B cell (primary cell): ENCODE measurements at regions of chr1 and their contacts with region 1.

Region 1: DNA sequence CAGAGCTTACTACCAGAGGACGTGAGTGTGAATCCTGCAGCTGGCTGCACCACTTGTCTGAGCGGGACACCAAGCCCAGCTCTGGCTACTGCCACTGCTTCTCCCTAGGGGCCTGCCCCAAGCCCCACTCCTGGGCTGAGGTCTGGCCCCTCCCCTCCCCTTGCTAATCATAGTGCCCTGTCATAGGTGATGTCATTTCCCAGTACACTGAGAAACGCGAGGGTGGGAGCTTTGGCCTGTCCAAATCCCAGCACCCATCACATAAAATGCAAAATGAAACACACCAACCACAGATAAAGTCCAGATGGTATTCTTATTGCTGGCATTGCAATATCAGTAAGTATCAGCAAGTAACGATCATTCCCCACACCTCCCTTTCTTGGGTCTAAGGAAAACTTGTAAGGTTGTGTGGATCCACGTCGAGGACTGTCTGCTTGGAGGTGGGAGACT is 77.7 kb downstream of the TOMM20 start:
- DNase-seq: no peak
- ATAC-seq: peak; percentile 55
- H3K4me3 ChIP-seq: no peak overlapping the region
- H3K4me3 Mint-ChIP-seq: peak overlapping the region; percentile 32
- H3K27ac ChIP-seq: no peak overlapping the region
- H3K27ac Mint-ChIP-seq: peak overlapping the region; percentile 74
- H3K4me1 ChIP-seq: peaks cover 13 to 22% of the 10 kb centered on the region in 2 donors
- H3K4me1 Mint-ChIP-seq: peaks cover 41% of the 10 kb centered on the region
- H3K27me3 ChIP-seq: no peaks in the 10 kb centered on the region
- H3K27me3 Mint-ChIP-seq: no peaks in the 10 kb centered on the region
- CTCF ChIP-seq: no peak

Region 2: DNA sequence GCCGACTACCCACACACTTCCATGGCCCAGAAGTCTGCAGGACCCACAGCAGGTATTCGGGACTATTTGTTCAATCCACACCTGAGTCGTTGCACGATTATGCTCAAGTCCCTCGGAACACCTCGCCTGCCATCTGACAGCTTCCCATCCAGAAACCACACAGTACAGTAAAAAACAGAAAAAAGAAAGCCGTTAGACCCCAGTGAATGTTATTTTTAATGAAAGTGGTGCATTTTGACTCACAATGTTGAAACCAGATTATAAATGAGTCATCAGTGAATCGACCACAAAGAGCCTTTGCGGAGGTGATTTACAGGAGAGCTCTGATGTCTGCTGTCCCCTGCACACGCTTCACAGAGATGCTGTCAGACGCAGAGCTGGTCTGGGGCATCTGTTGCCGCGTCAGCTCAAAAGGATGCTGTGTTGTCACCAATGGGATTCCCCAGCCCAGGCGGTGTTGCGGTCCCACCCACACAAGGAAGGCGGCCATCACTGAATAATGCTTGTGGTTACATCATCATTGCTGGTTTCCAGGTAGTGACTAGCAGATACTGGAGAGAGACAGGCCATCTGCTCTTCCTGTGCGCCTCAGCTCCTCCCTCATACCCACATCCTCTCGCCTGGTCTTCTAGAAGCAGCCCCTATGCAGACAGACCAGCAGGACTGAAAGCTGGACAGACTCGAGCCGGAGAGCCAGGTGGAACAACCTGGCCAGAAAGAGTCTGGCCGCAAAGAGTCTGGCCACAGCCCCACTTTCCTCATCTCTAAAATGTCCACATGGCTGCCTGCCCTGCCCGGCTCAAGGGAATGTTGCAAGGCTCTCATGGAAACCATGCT is 39.1 kb before region 1 on chr1:
- CTCF ChIA-PET with region 1: interaction called, 3 read pairs
- POLR2A ChIA-PET with region 1: interaction called, 8 read pairs
- intact Hi-C with region 1: loop called (anchors 1 kb)
- DNase-seq: peak; percentile 97
- ATAC-seq: peak; percentile 87
- H3K4me3 ChIP-seq: peak overlapping the region; percentile 23 to 52 (median 32)
- H3K4me3 Mint-ChIP-seq: peak overlapping the region; percentile 76
- H3K27ac ChIP-seq: peak overlapping the region; percentile 89 to 96
- H3K27ac Mint-ChIP-seq: peak overlapping the region; percentile 96
- H3K4me1 ChIP-seq: peaks cover 50 to 65% of the 10 kb centered on the region in 2 donors
- H3K4me1 Mint-ChIP-seq: peaks cover 82% of the 10 kb centered on the region
- H3K27me3 ChIP-seq: no peaks in the 10 kb centered on the region
- H3K27me3 Mint-ChIP-seq: no peaks in the 10 kb centered on the region
- CTCF ChIP-seq: no peak

Region 3: GRCh38 chr1:235181561-235182245 is 130.8 kb after region 1 on chr1:
- CTCF ChIA-PET with region 1: no interaction called
- POLR2A ChIA-PET with region 1: no interaction called
- intact Hi-C with region 1: no loop called
- DNase-seq: no peak
- ATAC-seq: no peak
- H3K4me3 ChIP-seq: no peak overlapping the region
- H3K4me3 Mint-ChIP-seq: no peak overlapping the region
- H3K27ac ChIP-seq: no peak overlapping the region
- H3K27ac Mint-ChIP-seq: no peak overlapping the region
- H3K4me1 ChIP-seq: no peaks in the 10 kb centered on the region
- H3K4me1 Mint-ChIP-seq: no peaks in the 10 kb centered on the region
- H3K27me3 ChIP-seq: no peaks in the 10 kb centered on the region
- H3K27me3 Mint-ChIP-seq: no peaks in the 10 kb centered on the region
- CTCF ChIP-seq: no peak

Region 4: DNA sequence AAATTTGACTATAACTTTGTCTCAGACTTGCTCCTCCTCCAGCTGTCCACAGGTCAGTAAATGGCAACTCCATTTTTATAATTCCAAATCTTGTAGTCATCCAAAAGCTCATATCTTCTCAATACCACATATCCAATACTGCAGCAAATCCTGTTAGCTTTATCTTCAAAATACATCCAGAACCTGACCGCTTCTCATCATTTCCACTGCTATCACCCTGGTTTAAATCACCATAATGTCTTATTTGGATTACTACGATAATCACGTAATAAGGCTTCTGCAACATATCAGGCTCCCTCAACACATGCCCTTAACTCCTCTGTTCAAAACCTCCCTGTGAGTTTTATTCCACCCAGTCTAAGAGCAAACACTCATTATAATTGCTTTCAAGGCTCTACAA is 1196.3 kb after region 1 on chr1:
- CTCF ChIA-PET with region 1: no interaction called
- POLR2A ChIA-PET with region 1: no interaction called
- intact Hi-C with region 1: no loop called
- DNase-seq: no peak
- ATAC-seq: no peak
- H3K4me3 ChIP-seq: no peak overlapping the region
- H3K4me3 Mint-ChIP-seq: no peak overlapping the region
- H3K27ac ChIP-seq: no peak overlapping the region
- H3K27ac Mint-ChIP-seq: no peak overlapping the region
- H3K4me1 ChIP-seq: no peaks in the 10 kb centered on the region
- H3K4me1 Mint-ChIP-seq: no peaks in the 10 kb centered on the region
- H3K27me3 ChIP-seq: no peaks in the 10 kb centered on the region
- H3K27me3 Mint-ChIP-seq: no peaks in the 10 kb centered on the region
- CTCF ChIP-seq: no peak